Spleen (tissue), 13 donors: ENCODE measurements at regions of chr19 and their contacts with region 1.

Region 1: GRCh38 chr19:39557441-39558151 is 17.6 kb upstream of the EID2 start:
- DNase-seq: no peak
- H3K4me3 ChIP-seq: peak overlapping the region in 1 of 8 donors; percentile 43
- H3K27ac ChIP-seq: peak overlapping the region; percentile 44 to 82 (median 58)
- H3K4me1 ChIP-seq: peaks cover 0 to 32% (median 16%) of the 10 kb centered on the region in 6 donors
- H3K27me3 ChIP-seq: peaks cover 0 to 3% (median 0%) of the 10 kb centered on the region in 7 donors
- CTCF ChIP-seq: no peak
- POLR2A ChIP-seq: no peak

Region 2: DNA sequence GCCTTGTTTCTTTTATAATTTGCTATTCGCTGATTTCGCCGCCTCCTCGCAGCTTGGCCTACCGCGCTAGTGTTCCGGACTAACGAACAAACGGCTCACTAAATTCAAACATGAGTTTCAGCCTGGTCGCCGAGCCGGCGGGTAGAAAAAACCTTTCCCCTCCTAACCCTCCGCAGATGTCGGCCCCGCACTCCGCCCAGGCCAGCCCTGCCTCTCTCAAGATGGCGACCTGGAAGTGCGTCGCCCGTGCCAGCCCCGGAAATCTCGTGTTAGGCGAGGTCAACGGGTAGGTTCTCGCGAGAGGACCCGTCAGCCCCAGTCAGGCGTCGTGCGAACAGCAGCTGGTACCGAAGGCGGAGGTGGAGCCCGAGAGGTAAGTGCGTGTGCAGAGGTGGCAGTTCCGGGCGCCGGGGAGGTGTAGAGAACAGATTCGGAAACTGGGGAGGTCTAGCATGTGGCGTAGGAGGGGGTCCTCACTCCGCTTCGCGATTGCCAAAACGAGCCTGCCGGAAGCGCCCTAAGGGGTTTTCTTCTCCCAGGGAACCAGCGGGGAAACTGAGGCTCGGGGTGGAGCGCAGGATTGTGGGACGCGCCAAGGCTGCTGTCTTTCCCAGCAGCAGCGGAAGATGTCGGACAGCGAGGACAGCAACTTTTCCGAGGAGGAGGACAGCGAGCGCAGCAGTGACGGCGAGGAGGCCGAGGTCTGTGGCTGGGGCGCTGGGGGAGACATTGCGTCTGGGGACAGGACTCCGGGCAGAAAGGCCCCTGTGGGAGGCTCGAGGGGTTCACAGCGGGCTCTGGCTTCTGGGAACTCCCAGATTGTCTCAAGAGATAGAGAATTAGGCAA is 112.1 kb before region 1 on chr19 and contains the start of gene SUPT5H:
- intact Hi-C with region 1: no loop called
- DNase-seq: peak; percentile 99
- H3K4me3 ChIP-seq: peak within 1 kb of the TSS; percentile 60 to 97 (median 82)
- H3K27ac ChIP-seq: peak within 1 kb of the TSS; percentile 89 to 97 (median 96)
- H3K4me1 ChIP-seq: peaks cover 42 to 66% (median 55%) of the 10 kb centered on the region in 6 donors
- H3K27me3 ChIP-seq: no peaks in the 10 kb centered on the region
- CTCF ChIP-seq: peak in 4 of 11 experiments; percentile 15 to 43 (median 30)
- POLR2A ChIP-seq: peak; percentile 77 to 89 (median 85)
- total RNA-seq, gene SUPT5H: 103 to 125 (median 108) TPM

Region 3: DNA sequence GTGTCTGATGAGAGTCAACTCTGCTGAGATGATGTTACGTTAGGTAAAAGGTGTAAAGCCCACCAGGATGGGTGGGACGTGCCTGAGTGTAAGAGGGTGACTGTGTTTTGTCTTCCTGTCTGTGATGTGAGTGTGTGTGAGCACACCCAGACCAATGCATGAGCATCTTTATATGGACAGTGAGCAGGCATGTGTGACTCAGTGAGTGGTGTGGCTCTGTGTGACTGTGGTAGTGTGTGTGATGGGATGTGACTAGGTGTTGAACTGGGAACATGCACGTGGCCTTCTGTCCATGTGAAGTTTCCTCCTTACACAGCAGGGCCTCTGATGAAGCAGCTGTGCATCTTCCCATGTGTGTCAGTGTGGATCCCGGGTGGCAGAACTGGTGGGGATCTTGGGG is 80.3 kb after region 1 on chr19:
- intact Hi-C with region 1: no loop called
- DNase-seq: no peak
- H3K4me3 ChIP-seq: no peak overlapping the region
- H3K27ac ChIP-seq: no peak overlapping the region
- H3K4me1 ChIP-seq: no peaks in the 10 kb centered on the region
- H3K27me3 ChIP-seq: peaks cover 0 to 66% (median 0%) of the 10 kb centered on the region in 7 donors
- CTCF ChIP-seq: no peak
- POLR2A ChIP-seq: no peak

Region 4: DNA sequence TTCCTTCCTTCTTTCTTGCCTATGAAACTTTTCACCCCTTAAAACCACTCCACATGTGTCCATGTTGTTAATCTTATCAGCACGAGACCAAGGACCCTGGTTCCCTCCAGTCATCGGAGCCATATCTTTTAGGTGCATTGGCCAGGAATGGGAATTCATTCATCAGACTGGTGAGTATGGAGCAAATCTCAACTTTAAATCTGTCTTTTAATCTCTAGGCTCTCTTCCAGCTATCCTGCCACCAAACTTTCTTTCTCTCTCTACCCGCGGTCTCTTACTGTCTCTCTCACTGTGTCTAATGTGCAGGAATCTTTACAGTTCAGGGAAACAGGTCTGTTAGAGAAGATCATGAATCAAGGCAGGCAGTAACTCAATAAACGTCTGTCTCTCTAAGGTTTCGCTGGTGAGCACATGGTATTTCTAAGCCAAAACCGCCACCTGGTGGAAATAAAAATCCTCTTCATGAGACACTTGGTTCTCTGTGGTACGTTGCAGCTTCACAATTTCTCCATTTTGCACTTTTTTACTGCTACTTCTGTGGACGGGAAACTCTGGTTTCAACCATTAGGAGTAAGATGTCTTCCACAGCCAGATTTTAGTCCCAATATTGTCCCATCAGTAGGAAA is 114.3 kb after region 1 on chr19:
- intact Hi-C with region 1: loop called (anchors 2 kb)
- DNase-seq: no peak
- H3K4me3 ChIP-seq: no peak overlapping the region
- H3K27ac ChIP-seq: no peak overlapping the region
- H3K4me1 ChIP-seq: peaks cover 0 to 9% (median 0%) of the 10 kb centered on the region in 6 donors
- H3K27me3 ChIP-seq: peaks cover 0 to 23% (median 0%) of the 10 kb centered on the region in 7 donors
- CTCF ChIP-seq: peak; percentile 19 to 67 (median 58)
- POLR2A ChIP-seq: no peak

Region 5: DNA sequence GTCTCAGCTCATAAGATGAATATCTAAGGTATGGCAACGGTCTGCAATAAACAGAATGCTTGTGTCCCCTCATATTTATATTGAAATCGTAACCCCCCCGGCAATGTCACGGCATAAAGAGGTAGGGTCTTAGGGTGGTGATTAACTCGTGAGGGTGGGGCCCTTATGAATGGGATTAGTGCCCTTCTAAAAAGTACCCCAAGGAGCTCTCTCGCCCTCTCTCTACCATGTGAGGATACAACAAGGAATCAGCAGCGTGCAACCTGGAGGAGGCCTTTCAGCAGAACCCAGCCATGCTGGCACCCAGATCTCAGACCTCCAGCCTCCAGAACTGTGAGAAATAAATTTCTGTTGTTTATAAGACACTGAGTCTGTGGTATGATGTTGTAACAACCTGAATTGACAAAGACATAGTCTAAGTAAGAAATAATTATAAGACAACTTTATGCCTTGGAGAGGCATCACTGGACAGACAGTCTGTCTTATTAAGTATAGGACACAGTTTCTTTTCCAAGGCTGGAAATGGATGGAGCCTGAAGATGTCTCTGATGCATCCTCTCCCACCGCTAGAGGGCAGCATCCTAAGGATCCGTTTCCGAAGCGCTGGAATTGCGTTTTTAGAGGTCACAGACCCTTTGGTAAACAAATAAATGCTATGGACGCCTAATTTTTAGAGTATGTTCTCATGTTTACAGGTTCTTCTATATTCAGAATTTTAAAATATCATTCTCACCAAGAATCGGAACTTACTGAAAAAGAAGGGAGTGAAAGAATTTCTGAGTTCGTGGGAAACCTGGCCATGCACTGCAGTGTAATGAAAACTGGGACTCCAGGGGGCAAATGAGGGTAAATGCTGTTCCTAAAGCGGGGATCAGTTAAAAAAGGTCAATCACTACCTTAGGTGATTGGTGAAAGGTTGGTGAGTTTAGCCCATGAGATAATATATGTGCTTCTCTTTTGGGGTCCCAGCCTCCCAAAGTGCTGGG is 207.8 kb after region 1 on chr19:
- intact Hi-C with region 1: loop called (anchors 10 kb)
- DNase-seq: no peak
- H3K4me3 ChIP-seq: no peak overlapping the region
- H3K27ac ChIP-seq: no peak overlapping the region
- H3K4me1 ChIP-seq: no peaks in the 10 kb centered on the region
- H3K27me3 ChIP-seq: peaks cover 0 to 35% (median 0%) of the 10 kb centered on the region in 7 donors
- CTCF ChIP-seq: peak in 9 of 11 experiments; percentile 46 to 79 (median 72)
- POLR2A ChIP-seq: no peak